A673 (cell line): ENCODE measurements at regions of chr1 and their contacts with region 1.

Region 1: GRCh38 chr1:32521165-32521564 is 18.1 kb upstream of the ZBTB8A start:
- DNase-seq: no peak
- H3K4me3 ChIP-seq: peak overlapping the region; percentile 41
- H3K27ac ChIP-seq: no peak overlapping the region
- H3K4me1 ChIP-seq: no peaks in the 10 kb centered on the region
- H3K27me3 ChIP-seq: no peaks in the 10 kb centered on the region
- CTCF ChIP-seq: no peak

Region 2: DNA sequence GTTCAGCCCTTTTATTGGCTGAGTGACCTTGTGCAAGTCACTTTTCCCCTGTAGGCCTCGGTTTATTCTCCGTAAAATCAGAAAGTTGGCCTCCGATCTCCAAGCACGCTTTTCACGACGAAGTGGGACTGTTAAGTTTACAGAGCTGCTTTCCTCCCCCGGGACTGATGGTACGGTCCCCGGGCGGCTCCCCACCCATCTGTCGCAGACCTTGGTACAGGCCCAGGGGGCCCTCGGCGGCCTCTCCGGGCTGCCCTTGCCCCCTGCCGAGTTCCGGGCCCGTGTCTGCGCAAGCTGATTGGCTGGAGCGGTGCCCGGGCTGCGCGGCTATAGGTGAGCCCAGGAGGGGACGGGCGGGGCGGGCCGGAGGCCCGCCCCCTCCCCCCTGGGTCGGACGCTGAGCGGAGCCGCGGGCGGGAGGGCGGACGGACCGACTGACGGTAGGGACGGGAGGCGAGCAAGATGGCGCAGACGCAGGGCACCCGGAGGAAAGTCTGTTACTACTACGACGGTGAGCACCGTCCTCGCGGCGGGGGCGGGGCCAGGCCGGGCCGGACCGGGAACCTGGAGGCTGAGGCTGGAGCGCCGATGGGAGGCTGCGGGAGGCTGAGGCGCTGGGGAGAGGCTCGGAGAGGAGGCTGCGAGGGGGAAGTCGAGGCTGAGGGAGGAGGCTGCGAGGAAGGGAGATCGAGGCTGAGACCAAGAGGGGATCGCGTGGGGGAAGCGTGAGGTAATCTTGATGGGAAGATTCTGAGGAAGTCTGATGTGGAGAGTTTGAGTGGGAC is 229.3 kb before region 1 on chr1 and contains the start of gene HDAC1:
- CTCF ChIA-PET with region 1: interaction called, 11 read pairs
- POLR2A ChIA-PET with region 1: no interaction called
- intact Hi-C with region 1: no loop called
- DNase-seq: peak; percentile 98
- H3K4me3 ChIP-seq: peak within 1 kb of the TSS; percentile 98
- H3K27ac ChIP-seq: peak within 1 kb of the TSS; percentile 90
- H3K4me1 ChIP-seq: peaks cover 22% of the 10 kb centered on the region
- H3K27me3 ChIP-seq: no peaks in the 10 kb centered on the region
- CTCF ChIP-seq: no peak
- total RNA-seq, gene HDAC1: 192 and 195 TPM in 2 replicates

Region 3: GRCh38 chr1:32538887-32539583 is 17.9 kb after region 1 on chr1 and contains the start of gene ZBTB8A:
- CTCF ChIA-PET with region 1: interaction called, 4 read pairs
- POLR2A ChIA-PET with region 1: interaction called, 19 read pairs
- intact Hi-C with region 1: no loop called
- DNase-seq: peak; percentile 79
- H3K4me3 ChIP-seq: peak within 1 kb of the TSS; percentile 51
- H3K27ac ChIP-seq: no peak within 1 kb of the TSS
- H3K4me1 ChIP-seq: no peaks in the 10 kb centered on the region
- H3K27me3 ChIP-seq: peaks cover 5% of the 10 kb centered on the region
- CTCF ChIP-seq: no peak
- total RNA-seq, gene ZBTB8A: 6.4 and 7.9 TPM in 2 replicates

Region 4: GRCh38 chr1:32612189-32612881 is 91.2 kb after region 1 on chr1:
- CTCF ChIA-PET with region 1: interaction called, 10 read pairs
- POLR2A ChIA-PET with region 1: no interaction called
- intact Hi-C with region 1: no loop called
- DNase-seq: peak; percentile 88
- H3K4me3 ChIP-seq: peak overlapping the region; percentile 63
- H3K27ac ChIP-seq: no peak overlapping the region
- H3K4me1 ChIP-seq: peaks cover 5% of the 10 kb centered on the region
- H3K27me3 ChIP-seq: no peaks in the 10 kb centered on the region
- CTCF ChIP-seq: no peak

Region 5: GRCh38 chr1:32650752-32651460 is 129.7 kb after region 1 on chr1 and contains the start of gene RBBP4:
- CTCF ChIA-PET with region 1: interaction called, 20 read pairs
- POLR2A ChIA-PET with region 1: interaction called, 3 read pairs
- intact Hi-C with region 1: loop called (anchors 10 kb)
- DNase-seq: peak; percentile 99
- H3K4me3 ChIP-seq: peak within 1 kb of the TSS; percentile 91
- H3K27ac ChIP-seq: peak within 1 kb of the TSS; percentile 99
- H3K4me1 ChIP-seq: peaks cover 28% of the 10 kb centered on the region
- H3K27me3 ChIP-seq: no peaks in the 10 kb centered on the region
- CTCF ChIP-seq: no peak
- total RNA-seq, gene RBBP4: 496 and 513 TPM in 2 replicates

Region 6: DNA sequence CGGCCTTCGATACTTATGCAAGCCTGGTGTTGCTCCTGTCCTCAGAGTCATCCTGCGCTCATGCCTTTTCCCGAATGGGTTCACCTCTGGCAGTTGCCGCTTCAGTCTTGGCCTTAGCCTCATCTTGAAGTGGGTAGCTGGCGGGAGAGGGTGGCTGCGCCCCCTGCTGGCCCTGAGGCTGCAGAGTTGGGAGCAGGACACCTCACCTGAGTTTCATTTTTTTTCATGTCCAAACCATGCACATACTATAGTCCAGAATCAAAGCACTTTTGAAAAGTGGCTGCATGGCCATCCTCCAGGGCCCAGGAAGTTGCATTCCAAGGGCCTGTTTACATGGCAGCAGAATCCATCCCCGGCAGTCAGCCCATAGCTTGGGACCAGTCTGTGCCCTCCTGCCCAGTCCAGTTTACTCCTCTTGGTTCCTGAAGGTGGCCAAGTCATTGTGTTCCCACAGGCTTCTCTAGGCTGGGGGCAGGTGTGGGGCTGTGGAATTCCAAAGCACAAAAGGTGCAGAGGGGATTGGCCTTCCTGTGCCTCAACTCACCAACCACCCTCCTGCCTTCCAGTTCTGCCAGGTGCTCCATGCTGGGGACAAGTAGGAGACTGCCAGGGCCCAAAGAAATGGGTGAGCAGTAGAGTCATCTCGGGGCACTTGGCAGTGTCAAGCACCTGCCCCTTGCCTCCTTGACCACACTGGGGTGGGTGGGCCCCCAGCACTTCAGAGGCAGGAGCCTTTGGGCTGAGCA is 252.0 kb after region 1 on chr1:
- CTCF ChIA-PET with region 1: interaction called, 46 read pairs
- POLR2A ChIA-PET with region 1: no interaction called
- intact Hi-C with region 1: loop called (anchors 1 kb)
- DNase-seq: peak; percentile 78
- H3K4me3 ChIP-seq: no peak overlapping the region
- H3K27ac ChIP-seq: no peak overlapping the region
- H3K4me1 ChIP-seq: no peaks in the 10 kb centered on the region
- H3K27me3 ChIP-seq: no peaks in the 10 kb centered on the region
- CTCF ChIP-seq: peak; percentile 96

Region 7: GRCh38 chr1:32876341-32877210 is 355.4 kb after region 1 on chr1:
- CTCF ChIA-PET with region 1: interaction called, 11 read pairs
- POLR2A ChIA-PET with region 1: no interaction called
- intact Hi-C with region 1: loop called (anchors 10 kb)
- DNase-seq: peak; percentile 69
- H3K4me3 ChIP-seq: no peak overlapping the region
- H3K27ac ChIP-seq: no peak overlapping the region
- H3K4me1 ChIP-seq: no peaks in the 10 kb centered on the region
- H3K27me3 ChIP-seq: no peaks in the 10 kb centered on the region
- CTCF ChIP-seq: peak; percentile 99

Region 8: DNA sequence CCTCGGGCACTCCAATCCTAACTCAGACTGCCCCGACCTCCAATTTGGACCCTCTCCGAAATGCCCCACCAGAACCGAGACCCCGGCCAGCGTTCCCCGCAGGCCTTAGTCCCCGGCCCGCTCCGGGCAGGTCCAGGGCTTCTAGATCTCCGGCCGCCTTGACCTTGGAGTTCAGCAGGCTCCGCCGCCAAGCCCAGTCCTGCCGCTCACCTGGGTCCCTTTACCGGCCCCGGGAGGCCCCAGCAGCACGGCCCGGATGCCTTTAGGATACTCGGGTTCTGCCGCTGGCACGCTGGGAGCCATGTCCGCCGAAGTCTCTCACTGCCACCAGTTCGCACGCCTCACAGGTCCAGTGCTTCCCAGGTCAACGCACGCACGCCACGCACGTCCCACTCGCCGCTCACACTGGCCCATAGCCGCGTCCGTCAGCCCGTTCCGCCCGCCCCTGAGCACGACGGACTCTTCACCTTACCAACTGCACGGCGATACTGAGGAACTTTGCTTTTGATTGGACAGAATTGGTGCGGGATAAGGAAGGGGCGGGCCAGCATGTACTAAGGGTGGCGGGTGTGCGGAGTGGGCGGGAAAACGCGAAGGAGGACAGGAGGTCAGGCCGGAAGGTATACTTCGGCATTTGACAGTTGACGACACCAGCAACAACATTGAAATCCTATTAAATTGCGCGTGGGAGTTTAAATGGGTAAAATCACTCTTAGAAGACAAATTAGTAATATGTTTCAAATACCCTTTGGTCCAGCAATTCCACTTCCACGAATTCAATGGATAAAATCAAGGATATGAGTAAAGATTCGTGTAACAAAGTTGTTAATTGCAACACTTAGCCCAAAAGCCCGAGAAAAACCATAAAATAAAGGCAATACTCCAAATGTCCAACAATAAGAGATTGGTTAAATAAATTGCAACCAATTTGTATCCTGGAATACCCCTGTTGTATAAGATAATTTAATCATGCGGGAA is 515.6 kb after region 1 on chr1 and contains the start of gene AK2:
- CTCF ChIA-PET with region 1: no interaction called
- POLR2A ChIA-PET with region 1: no interaction called
- intact Hi-C with region 1: no loop called
- DNase-seq: peak; percentile 98
- H3K4me3 ChIP-seq: peak within 1 kb of the TSS; percentile 58
- H3K27ac ChIP-seq: peak within 1 kb of the TSS; percentile 66
- H3K4me1 ChIP-seq: peaks cover 6% of the 10 kb centered on the region
- H3K27me3 ChIP-seq: no peaks in the 10 kb centered on the region
- CTCF ChIP-seq: no peak
- total RNA-seq, gene AK2: 196 and 208 TPM in 2 replicates